Activated CD8-positive, alpha-beta T cell treated with anti-CD3 and anti-CD28 coated beads, Interleukin-2, amount 10 ng/mL, durations not matched to agents 7 days and 5 days (primary cell): ENCODE measurements at regions of chr2 and their contacts with region 1.

Region 1: DNA sequence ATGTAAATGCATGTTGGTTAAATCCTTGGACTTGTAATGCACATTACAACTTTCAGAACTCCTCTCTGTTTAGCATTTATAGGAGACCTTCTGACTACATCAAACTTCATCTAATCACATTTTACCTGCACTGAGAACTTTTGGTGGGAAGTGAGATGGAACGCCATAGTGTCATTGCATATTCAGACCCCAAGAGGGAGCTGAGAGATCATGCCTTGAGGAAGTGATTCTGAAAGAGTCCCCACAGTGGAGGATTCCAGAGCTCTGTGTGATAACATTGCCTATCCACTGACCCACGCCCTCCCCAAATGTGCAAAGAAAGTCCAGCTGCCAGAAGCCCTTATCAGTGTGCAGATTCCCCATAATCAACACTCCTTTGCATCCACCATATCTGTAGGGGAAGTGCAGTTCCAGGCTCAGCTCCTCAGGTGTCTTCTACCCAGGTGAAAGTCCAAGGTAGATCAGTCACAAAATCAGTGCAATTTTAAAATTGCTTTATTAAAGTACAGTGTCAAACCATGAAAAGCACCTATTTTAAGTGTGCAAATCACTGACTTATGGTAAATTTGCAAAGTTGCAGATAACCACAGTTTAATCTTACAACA is 212.4 kb downstream of the RPIA start:
- DNase-seq: peak; percentile 26
- ATAC-seq: no peak
- H3K4me3 Mint-ChIP-seq: no peak overlapping the region
- H3K27ac Mint-ChIP-seq: no peak overlapping the region
- H3K4me1 Mint-ChIP-seq: no peaks in the 10 kb centered on the region
- H3K27me3 Mint-ChIP-seq: peaks cover 11% of the 10 kb centered on the region

Region 2: DNA sequence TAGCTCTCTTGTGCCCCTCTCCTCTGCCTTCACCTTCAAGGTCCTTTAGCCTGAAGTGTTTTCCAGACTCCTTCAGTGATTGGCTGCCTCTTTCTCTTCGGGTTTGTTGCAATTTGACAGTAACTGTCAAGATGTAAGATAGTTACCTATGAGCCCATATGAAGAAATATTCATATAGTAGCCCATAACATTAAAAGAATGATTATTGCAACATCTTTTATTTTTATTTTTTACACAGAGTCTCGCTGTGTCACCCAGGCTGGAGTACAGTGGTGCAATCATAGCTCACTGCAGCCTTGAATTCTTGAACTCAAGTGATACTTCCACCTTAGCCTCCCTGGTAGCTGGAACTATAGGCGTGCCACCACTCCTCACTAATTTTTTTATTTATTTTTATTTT is 531.8 kb before region 1 on chr2:
- CTCF ChIA-PET with region 1: no interaction called
- POLR2A ChIA-PET with region 1: no interaction called
- DNase-seq: no peak
- ATAC-seq: no peak
- H3K4me3 Mint-ChIP-seq: no peak overlapping the region
- H3K27ac Mint-ChIP-seq: no peak overlapping the region
- H3K4me1 Mint-ChIP-seq: no peaks in the 10 kb centered on the region
- H3K27me3 Mint-ChIP-seq: peaks cover 7% of the 10 kb centered on the region

Region 3: DNA sequence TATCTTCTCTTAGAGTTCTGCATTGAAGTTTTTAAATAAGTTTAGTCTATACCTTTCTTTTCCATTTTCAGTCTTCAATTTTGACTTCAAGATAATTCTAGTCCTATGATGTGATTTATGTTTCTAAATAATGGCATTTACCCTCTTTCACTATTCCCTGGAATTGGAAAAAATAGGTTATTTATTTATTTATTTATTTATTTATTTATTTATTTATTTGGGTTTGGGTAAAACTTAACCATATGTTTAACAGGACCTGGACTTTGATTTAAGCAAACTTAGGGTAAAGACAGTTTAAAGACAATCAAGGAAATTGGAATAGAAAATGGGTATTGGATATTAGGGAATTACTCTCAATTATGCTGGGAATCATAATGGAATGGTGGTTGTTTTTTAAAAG is 30.2 kb before region 1 on chr2:
- CTCF ChIA-PET with region 1: no interaction called
- POLR2A ChIA-PET with region 1: no interaction called
- DNase-seq: no peak
- ATAC-seq: no peak
- H3K4me3 Mint-ChIP-seq: no peak overlapping the region
- H3K27ac Mint-ChIP-seq: no peak overlapping the region
- H3K4me1 Mint-ChIP-seq: no peaks in the 10 kb centered on the region
- H3K27me3 Mint-ChIP-seq: peaks cover 20% of the 10 kb centered on the region

Region 4: DNA sequence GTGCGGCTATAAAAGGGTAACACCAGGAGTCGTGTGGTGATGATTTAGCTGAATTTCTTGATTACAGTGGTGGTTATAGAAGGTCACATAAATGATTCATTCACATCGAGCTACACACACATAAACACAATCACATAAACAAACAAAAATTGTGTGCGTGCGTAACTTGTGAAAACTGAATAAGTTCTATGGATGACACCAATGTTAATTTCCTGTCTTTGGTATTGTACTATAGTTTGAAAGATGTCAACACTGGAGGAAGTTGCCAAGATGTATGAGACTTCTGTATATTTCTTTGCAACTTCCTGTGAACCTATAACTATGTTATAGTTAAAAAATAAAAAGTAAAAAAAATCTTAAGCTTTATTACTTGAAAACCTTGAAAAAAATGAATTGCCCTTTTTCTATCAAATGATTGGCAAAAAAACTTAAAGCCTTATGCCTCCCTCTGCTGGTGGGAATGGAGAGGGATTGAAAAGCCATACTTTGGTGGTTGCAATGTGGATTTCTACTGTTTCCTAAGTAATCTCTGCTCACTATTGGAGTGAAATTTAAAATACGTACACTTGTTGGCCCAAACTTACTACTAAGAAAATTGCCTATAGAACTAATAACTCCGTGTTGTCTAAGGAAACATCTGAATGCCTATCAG is 15.4 kb after region 1 on chr2:
- CTCF ChIA-PET with region 1: interaction called, 11 read pairs
- POLR2A ChIA-PET with region 1: no interaction called
- DNase-seq: no peak
- ATAC-seq: no peak
- H3K4me3 Mint-ChIP-seq: no peak overlapping the region
- H3K27ac Mint-ChIP-seq: no peak overlapping the region
- H3K4me1 Mint-ChIP-seq: no peaks in the 10 kb centered on the region
- H3K27me3 Mint-ChIP-seq: peaks cover 8% of the 10 kb centered on the region